ENCODE measurements at regions of chr7 and their contacts with region 1.

Region 1: GRCh38 chr7:91089382-91089963 is 174.8 kb upstream of the FZD1 start:
- DNase-seq: no peak
- H3K4me3 ChIP-seq: peak overlapping the region; percentile 9
- H3K27ac ChIP-seq: no peak overlapping the region
- H3K27me3 ChIP-seq: no peaks in the 10 kb centered on the region
- CTCF ChIP-seq: peak; percentile 71

Region 2: GRCh38 chr7:90503379-90503778 is 586.1 kb before region 1 on chr7:
- in situ Hi-C with region 1: no loop called
- DNase-seq: no peak
- H3K4me3 ChIP-seq: no peak overlapping the region
- H3K27ac ChIP-seq: no peak overlapping the region
- H3K27me3 ChIP-seq: no peaks in the 10 kb centered on the region
- CTCF ChIP-seq: no peak

Region 3: DNA sequence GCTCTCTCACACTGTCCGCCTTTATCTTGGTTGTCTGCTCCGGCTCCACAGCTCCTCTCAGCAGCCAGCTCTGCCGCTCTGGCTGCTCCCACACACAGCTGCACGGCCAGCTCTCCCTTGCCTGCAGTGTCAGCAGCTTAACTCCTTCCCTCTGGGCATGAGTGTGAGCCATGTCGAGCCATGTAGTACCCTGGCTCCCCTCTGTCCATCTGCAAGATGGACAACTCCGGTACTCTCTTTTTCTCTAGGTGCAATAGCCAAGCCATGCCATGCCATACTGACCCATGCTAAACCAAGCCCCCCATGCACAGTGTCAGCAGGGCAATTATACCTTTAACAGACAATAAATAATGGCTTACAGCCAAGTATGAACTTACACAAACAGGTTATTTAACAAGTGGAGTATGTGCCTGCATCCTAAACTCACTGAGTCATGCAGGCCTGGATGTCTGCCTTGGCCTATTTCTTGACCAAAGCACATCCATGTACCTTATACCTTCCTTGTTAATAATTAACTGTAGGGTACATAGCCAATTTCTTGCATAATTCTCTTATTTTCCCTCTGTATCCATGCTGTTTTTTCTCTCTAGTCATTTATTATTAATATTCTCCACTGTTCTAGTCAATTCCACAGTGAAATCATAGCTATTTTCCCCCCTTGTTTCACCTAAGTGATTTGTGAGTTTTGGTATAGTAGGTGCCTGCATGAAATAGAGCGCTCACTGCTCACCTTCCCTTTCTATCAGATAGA is 322.5 kb before region 1 on chr7:
- in situ Hi-C with region 1: no loop called
- DNase-seq: peak; percentile 47
- H3K4me3 ChIP-seq: no peak overlapping the region
- H3K27ac ChIP-seq: peak overlapping the region; percentile 41
- H3K27me3 ChIP-seq: no peaks in the 10 kb centered on the region
- CTCF ChIP-seq: no peak

Region 4: DNA sequence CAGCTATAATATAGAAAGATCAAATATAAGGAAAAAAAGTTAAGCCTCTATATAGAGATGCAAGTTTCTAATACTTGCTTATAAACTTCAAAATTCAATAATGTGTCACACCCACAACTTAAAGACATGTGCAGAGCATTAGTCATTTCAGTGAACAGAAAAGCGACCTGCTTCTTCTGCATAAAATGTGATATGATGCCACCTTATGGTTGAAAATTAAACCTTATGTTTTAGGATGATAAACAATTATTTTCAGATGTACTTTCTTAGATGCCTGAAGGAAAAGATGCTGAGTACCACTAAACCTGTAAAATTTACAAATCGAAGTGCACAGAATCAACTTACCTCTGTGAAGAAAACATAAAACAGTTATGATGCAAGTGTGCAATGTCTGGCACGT is 695.0 kb after region 1 on chr7:
- in situ Hi-C with region 1: loop called (anchors 25 kb)
- DNase-seq: peak; percentile 26
- H3K4me3 ChIP-seq: no peak overlapping the region
- H3K27ac ChIP-seq: no peak overlapping the region
- H3K27me3 ChIP-seq: no peaks in the 10 kb centered on the region
- CTCF ChIP-seq: peak; percentile 34